Panc1 (cell line): ENCODE measurements at regions of chr3 and their contacts with region 1.

Region 1: GRCh38 chr3:133187870-133188379 is 149.7 kb downstream of the TMEM108 start:
- DNase-seq: no peak
- ATAC-seq: no peak
- H3K4me3 ChIP-seq: no peak overlapping the region
- H3K27ac ChIP-seq: no peak overlapping the region
- H3K4me1 ChIP-seq: no peaks in the 10 kb centered on the region
- H3K27me3 ChIP-seq: peaks cover 8% of the 10 kb centered on the region
- CTCF ChIP-seq: no peak

Region 2: DNA sequence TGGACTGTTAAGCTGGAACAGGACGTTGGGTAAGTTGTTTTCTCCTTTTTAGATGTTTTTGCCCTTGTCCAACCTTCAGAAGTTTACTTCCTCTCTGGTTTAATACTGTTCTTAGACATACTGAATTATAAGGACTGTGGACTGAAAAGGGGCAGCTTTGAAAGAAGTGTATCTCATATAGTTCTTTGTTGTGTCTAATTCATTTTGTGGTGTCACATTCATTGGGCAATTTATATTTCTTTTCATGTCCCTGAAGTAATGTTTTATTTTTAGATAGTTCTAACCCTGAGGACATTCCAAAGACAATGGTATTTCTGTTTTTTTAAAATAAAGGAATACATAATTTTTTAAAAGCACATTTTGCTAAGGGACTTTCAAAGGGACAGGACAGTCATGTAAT is 104.5 kb before region 1 on chr3:
- CTCF ChIA-PET with region 1: no interaction called
- POLR2A ChIA-PET with region 1: interaction called, 19 read pairs
- in situ Hi-C with region 1: no loop called
- intact Hi-C with region 1: no loop called
- DNase-seq: no peak
- ATAC-seq: no peak
- H3K4me3 ChIP-seq: no peak overlapping the region
- H3K27ac ChIP-seq: no peak overlapping the region
- H3K4me1 ChIP-seq: no peaks in the 10 kb centered on the region
- H3K27me3 ChIP-seq: peaks cover 5% of the 10 kb centered on the region; the same call in 1 of the 2 replicates
- CTCF ChIP-seq: no peak

Region 3: GRCh38 chr3:134087046-134087985 is 899.4 kb after region 1 on chr3:
- CTCF ChIA-PET with region 1: no interaction called
- POLR2A ChIA-PET with region 1: no interaction called
- in situ Hi-C with region 1: no loop called
- intact Hi-C with region 1: no loop called
- DNase-seq: no peak
- ATAC-seq: 0 out of 2 replicates have a peak, but pooled peaks have one; percentile 12
- H3K4me3 ChIP-seq: no peak overlapping the region
- H3K27ac ChIP-seq: no peak overlapping the region
- H3K4me1 ChIP-seq: no peaks in the 10 kb centered on the region
- H3K27me3 ChIP-seq: no peaks in the 10 kb centered on the region
- CTCF ChIP-seq: no peak